ENCODE measurements at regions of chr17 and their contacts with region 1.

Region 1: GRCh38 chr17:43338886-43339516 is 59.8 kb upstream of the ARL4D start:
- DNase-seq: no peak

Region 2: GRCh38 chr17:43324205-43324893 is 14.7 kb before region 1 on chr17:
- CTCF ChIA-PET with region 1: no interaction called
- POLR2A ChIA-PET with region 1: no interaction called
- DNase-seq: no peak

Region 3: DNA sequence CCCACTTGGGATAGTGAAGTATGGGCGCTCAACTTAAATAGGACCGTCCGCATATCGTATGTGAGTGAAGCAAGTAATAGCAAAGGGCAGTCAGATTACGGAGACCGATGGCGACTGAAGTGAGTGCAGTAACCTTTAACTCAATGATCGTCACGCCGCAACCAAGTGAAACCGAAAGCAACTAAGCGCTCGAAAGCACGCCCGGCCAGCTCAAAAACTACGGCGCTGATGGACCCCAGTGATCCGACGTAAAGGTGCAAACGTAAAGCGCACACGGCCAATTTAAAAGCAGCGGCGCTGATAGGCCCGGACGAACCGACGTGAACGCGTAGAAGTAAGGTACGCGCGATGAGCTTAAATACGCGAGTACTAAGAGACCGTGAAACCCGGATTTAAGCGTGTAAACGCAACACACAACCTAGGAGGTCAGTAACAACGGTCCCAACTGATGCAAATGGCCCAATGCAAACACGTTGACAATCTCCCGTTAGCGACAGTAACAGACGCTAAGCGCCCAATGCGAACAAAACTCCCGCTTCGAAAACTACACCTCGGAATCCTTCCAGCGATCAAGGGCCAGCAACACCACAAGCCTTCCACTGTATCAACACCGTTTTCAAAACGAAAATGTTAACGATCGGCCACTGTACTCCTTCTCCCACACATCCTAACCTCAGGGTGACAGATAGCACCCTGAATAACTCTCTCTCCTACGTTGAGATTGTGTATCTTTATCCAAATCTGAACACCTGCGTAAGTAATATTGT is 21.9 kb after region 1 on chr17:
- CTCF ChIA-PET with region 1: interaction called, 10 read pairs
- POLR2A ChIA-PET with region 1: interaction called, 3 read pairs
- DNase-seq: no peak

Measured in HEK293T (cell line).